ENCODE measurements at regions of chr10 and their contacts with region 1.

Region 1: GRCh38 chr10:27558612-27559020 is 54.5 kb downstream of the RAB18 start:
- DNase-seq: peak in 1 of 2 donors; percentile 66
- ATAC-seq: peak; percentile 67 to 93 (median 84)
- H3K4me3 ChIP-seq: no peak overlapping the region
- H3K27ac ChIP-seq: no peak overlapping the region
- H3K4me1 ChIP-seq: no peaks in the 10 kb centered on the region
- H3K27me3 ChIP-seq: no peaks in the 10 kb centered on the region
- CTCF ChIP-seq: peak; percentile 35 to 79 (median 72)

Region 2: DNA sequence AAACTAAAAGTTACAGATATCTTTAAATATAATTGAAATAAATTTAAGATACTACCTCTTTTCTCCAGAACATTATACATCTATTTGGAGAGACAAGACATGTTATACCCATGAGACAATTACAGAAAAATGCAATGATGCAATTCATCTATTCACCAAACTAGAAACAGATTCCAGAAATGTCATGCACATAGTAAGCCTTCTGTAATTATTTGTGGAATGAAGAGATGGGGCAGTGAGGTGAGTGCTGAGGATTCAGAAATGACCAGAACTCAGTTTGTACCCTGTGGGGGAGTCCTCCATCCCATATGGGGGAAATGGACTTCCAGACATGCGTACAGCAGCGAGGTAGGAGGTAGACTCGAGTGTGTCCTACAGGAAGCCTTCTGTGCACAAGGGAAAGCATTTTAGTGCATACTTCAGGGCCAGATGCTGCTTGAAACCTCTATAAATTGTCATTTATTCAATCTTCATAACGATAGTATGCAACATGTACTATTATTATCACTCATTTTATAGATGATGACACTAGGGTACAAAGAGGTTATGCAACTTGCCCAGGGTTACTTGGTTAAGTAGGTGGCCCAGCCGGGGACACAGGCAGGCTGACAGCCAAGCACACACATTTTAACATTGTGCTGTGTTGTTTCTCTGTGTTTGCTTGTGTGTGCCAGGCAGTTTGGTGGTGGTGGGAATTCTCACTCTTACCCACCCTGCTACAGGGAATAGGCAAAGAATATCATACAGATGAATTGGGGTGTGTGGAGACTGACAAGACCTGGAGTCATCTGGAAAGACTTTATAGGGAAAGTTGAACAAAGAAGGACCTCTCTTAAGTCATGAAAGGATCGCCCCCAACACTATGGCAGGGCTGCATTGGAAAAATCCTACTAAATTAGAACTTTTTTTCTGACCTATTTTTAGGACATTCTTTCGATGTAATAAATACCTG is 87.9 kb after region 1 on chr10:
- intact Hi-C with region 1: loop called in 2 of 10 experiments (anchors 2 to 10 kb)
- DNase-seq: no peak
- ATAC-seq: no peak
- H3K4me3 ChIP-seq: no peak overlapping the region
- H3K27ac ChIP-seq: no peak overlapping the region
- H3K4me1 ChIP-seq: no peaks in the 10 kb centered on the region
- H3K27me3 ChIP-seq: no peaks in the 10 kb centered on the region
- CTCF ChIP-seq: no peak

Region 3: GRCh38 chr10:27661514-27662286 is 103.1 kb after region 1 on chr10:
- intact Hi-C with region 1: loop called in 7 of 10 experiments (anchors 1 to 10 kb)
- DNase-seq: no peak
- ATAC-seq: no peak
- H3K4me3 ChIP-seq: no peak overlapping the region
- H3K27ac ChIP-seq: no peak overlapping the region
- H3K4me1 ChIP-seq: peaks cover 0 to 27% (median 0%) of the 10 kb centered on the region in 9 donors
- H3K27me3 ChIP-seq: peaks cover 0 to 10% (median 0%) of the 10 kb centered on the region in 7 donors
- CTCF ChIP-seq: no peak

Region 4: DNA sequence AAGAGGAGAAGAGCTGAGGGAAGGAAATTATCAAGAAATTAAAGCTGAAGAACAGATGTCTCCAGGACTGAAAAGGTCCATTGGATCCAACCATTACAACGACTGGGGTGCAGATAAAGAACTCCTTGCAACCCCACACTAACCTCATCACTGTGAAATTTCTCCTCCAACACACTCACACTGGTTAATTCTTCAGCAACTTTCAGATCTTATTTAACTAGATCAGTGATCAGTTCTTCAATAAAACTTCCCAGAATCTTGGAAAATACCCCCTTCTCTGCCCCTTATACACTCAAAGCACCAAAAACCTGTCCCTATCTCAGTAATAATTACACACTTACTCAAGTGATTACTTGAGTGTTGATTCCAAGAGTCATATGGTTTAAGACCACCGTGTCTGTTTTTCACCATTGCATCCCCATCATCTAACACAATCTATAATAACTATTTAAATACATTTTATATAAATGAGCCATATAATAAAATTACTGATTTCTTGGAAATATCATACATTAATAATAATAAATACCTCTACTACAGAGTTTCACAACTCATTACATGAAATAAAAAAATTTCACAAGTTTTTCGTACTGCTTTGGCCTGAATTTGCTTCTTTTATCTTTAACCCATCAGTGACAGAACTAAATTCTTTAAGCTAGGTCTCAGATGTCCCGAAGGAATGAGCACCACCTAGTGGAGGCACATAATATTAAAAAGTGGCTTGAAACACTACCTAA is 620.6 kb after region 1 on chr10:
- intact Hi-C with region 1: loop called in 5 of 10 experiments (anchors 5 to 10 kb)
- DNase-seq: peak in 1 of 2 donors; percentile 21
- ATAC-seq: peak in 2 of 8 donors; percentile 56 to 61
- H3K4me3 ChIP-seq: no peak overlapping the region
- H3K27ac ChIP-seq: peak overlapping the region in 1 of 10 donors; percentile 2
- H3K4me1 ChIP-seq: peaks cover 0 to 21% (median 5%) of the 10 kb centered on the region in 9 donors
- H3K27me3 ChIP-seq: peaks cover 0 to 8% (median 0%) of the 10 kb centered on the region in 7 donors
- CTCF ChIP-seq: peak; percentile 58 to 83 (median 73)

Region 5: DNA sequence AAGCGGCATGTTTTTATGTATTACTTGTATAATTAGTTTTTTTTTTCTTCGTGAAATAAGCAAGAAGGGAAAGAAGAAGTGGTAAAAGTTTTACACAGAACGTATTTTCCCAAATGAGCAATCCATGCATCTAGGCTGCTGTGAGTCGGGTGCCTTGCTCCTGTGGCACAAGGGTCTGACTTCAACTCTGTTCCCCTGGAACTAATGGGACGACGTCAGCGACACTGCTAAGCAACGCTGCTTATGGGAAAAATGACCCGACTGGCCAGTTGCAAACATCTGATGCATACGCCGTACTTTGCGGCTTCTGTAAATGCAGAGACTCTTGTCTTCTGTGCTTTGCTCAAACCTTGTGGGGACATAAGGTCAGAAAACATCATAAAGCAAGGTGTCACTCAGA is 678.0 kb after region 1 on chr10:
- intact Hi-C with region 1: loop called in 6 of 10 experiments (anchors 5 to 10 kb)
- DNase-seq: no peak
- ATAC-seq: no peak
- H3K4me3 ChIP-seq: no peak overlapping the region
- H3K27ac ChIP-seq: no peak overlapping the region
- H3K4me1 ChIP-seq: peaks cover 0 to 2% (median 0%) of the 10 kb centered on the region in 9 donors
- H3K27me3 ChIP-seq: no peaks in the 10 kb centered on the region
- CTCF ChIP-seq: no peak

Region 6: GRCh38 chr10:28241741-28242399 is 683.3 kb after region 1 on chr10:
- intact Hi-C with region 1: loop called in 6 of 10 experiments (anchors 5 to 10 kb)
- DNase-seq: peak in 1 of 2 donors; percentile 28
- ATAC-seq: peak in 6 of 8 donors; percentile 56 to 81 (median 71)
- H3K4me3 ChIP-seq: no peak overlapping the region
- H3K27ac ChIP-seq: no peak overlapping the region
- H3K4me1 ChIP-seq: peaks cover 0 to 20% (median 0%) of the 10 kb centered on the region in 9 donors
- H3K27me3 ChIP-seq: no peaks in the 10 kb centered on the region
- CTCF ChIP-seq: peak; percentile 75 to 94 (median 91)